Gastrocnemius medialis (tissue), 4 donors: ENCODE measurements at regions of chr19 and their contacts with region 1.

Region 1: DNA sequence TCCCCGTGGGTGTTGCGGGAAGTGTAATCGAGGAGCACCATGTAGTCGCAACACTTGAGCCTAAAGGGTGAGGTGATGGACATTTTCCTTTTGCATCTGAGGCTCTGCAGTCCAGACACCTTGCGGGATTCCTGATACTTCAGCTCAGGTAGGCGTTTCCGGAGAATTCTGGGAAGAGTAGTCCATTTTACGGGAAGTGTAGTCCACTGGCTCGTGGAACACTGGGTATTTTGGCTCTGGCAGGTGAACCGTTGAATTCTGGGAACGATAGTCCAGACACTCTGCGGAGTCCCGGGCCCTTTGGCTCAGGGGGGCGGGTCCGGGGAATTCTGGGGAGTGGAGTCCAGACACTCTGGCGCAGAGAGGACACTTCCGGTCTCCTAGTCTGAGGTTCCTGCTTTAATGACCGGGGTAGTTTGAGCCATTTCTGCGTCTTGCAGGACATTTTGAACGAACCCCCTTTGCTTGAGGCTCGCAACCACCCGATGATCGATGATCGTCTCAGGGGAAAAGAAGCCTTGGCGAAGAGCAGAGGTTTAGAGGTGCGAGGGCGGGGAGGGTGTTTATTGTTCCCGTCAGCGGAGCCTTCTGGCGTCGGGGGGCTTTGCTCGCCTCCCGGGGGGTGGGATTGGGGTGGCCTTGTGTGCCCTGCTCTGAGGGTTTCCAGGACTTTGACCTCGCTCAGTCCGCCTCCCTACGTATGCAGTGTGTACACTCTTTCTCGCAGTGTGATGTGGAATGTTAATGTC is at the start of gene ZNF223:
- DNase-seq: peak; percentile 94
- ATAC-seq: peak; percentile 100
- H3K4me3 ChIP-seq: peak within 1 kb of the TSS; percentile 72 to 84 (median 81)
- H3K27ac ChIP-seq: peak within 1 kb of the TSS; percentile 73 to 81 (median 78)
- H3K4me1 ChIP-seq: peaks cover 12 to 18% of the 10 kb centered on the region in 2 donors
- H3K27me3 ChIP-seq: peaks cover 0 to 25% (median 5%) of the 10 kb centered on the region in 3 donors
- CTCF ChIP-seq: no peak
- POLR2A ChIP-seq: no peak
- total RNA-seq, gene ZNF223: 0.56 to 3.0 (median 0.91) TPM in 3 of 4 donors, not detected in the other

Region 2: DNA sequence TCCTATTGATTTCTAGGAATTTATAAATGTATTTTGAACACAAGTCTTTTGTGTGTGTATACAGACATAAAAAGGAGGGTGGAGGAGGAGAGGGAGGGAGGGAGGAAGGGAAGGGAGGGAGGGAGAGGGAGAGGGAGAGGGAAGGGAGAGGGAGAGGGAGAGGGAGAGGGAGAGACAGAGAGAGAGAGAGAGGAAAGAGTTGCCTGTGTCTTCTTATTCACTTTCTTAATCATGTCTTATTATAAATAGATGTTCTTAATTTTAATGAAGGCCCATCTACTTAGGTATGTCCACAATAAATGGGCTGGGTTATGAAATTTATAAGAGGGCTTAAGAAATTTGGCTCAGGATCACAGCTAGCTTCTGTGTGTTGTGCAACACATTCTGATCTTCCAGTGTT is 156.1 kb before region 1 on chr19:
- in situ Hi-C with region 1: no loop called
- intact Hi-C with region 1: no loop called
- DNase-seq: no peak
- ATAC-seq: no peak
- H3K4me3 ChIP-seq: no peak overlapping the region
- H3K27ac ChIP-seq: no peak overlapping the region
- H3K4me1 ChIP-seq: peaks cover 0 to under 1% of the 10 kb centered on the region in 2 donors
- H3K27me3 ChIP-seq: no peaks in the 10 kb centered on the region
- CTCF ChIP-seq: no peak
- POLR2A ChIP-seq: no peak

Region 3: DNA sequence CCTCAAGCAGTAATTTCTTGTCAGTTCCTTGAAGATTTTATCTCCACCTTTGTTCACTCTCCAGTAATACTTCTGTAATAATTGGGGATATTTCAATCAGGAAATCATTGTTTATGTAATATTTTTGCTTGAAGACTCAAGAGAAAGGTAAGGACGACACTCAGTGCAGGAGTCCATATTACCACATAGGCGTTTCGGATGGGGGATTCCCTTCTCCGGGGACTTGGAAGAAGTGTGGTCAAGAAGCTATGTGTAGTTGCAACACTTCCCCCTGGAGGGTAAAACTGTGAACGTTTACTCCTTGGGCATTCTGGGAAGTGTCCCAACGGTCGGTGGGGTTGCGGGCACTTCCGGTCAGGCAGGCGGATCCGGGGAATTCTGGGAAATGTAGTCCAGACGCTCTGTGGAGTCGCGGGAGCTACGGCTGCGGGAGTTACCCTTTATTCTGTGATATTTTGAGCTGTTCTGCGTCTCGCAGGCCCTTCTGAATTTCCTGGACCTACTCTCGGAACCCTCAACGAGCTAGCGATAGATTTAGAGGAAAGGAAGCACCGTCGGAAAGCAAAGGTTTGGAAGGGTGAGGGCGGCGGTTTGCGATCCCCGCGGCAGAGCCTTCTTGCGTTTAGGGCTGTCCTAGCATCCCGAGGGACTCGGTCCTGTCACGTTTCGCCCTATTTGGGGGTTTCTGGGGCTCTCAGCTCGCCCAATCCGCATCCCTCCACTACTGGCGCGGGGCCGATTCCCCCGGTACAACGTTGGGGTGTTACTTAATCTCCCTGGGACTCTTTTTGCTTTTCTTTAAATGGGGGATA is 100.8 kb before region 1 on chr19 and contains the start of gene ZNF221:
- in situ Hi-C with region 1: no loop called
- intact Hi-C with region 1: loop called (anchors 10 kb)
- DNase-seq: peak; percentile 87 to 90
- ATAC-seq: peak; percentile 100
- H3K4me3 ChIP-seq: peak within 1 kb of the TSS; percentile 70 to 97 (median 84)
- H3K27ac ChIP-seq: peak within 1 kb of the TSS; percentile 66 to 80 (median 74)
- H3K4me1 ChIP-seq: peaks cover 0 to 3% of the 10 kb centered on the region in 2 donors
- H3K27me3 ChIP-seq: no peaks in the 10 kb centered on the region
- CTCF ChIP-seq: peak in 4 of 5 experiments; percentile 19 to 48 (median 38)
- POLR2A ChIP-seq: no peak
- total RNA-seq, gene ZNF221: 0.76 to 15.3 (median 0.96) TPM

Region 4: GRCh38 chr19:44025217-44025936 is 26.5 kb before region 1 on chr19 and contains the start of gene ZNF222:
- in situ Hi-C with region 1: no loop called
- intact Hi-C with region 1: loop called (anchors 1 kb)
- DNase-seq: peak; percentile 63 to 67
- ATAC-seq: peak; percentile 91 to 96
- H3K4me3 ChIP-seq: peak within 1 kb of the TSS; percentile 62 to 86 (median 78)
- H3K27ac ChIP-seq: peak within 1 kb of the TSS; percentile 58 to 71 (median 63)
- H3K4me1 ChIP-seq: no peaks in the 10 kb centered on the region
- H3K27me3 ChIP-seq: no peaks in the 10 kb centered on the region
- CTCF ChIP-seq: no peak
- POLR2A ChIP-seq: no peak
- total RNA-seq, gene ZNF222: 0.56 to 1.6 (median 1.1) TPM

Region 5: GRCh38 chr19:44093931-44094765 is 42.3 kb after region 1 on chr19 and contains the start of gene ZNF224:
- in situ Hi-C with region 1: no loop called
- intact Hi-C with region 1: loop called (anchors 1 kb)
- DNase-seq: peak; percentile 85 to 87
- ATAC-seq: peak; percentile 100
- H3K4me3 ChIP-seq: peak within 1 kb of the TSS; percentile 76 to 91 (median 80)
- H3K27ac ChIP-seq: peak within 1 kb of the TSS; percentile 70 to 82 (median 73)
- H3K4me1 ChIP-seq: peaks cover 7 to 10% of the 10 kb centered on the region in 2 donors
- H3K27me3 ChIP-seq: no peaks in the 10 kb centered on the region
- CTCF ChIP-seq: no peak
- POLR2A ChIP-seq: peak in 1 of 2 donors; percentile 41
- total RNA-seq, gene ZNF224: 4.9 to 14.1 (median 6.9) TPM

Region 6: GRCh38 chr19:44141191-44142058 is 89.6 kb after region 1 on chr19 and contains the start of gene ZNF234:
- in situ Hi-C with region 1: loop called in 1 of 4 experiments (anchors 10 kb)
- intact Hi-C with region 1: no loop called
- DNase-seq: peak; percentile 78
- ATAC-seq: peak; percentile 98 to 99
- H3K4me3 ChIP-seq: peak within 1 kb of the TSS; percentile 85 to 98 (median 88)
- H3K27ac ChIP-seq: peak within 1 kb of the TSS; percentile 78 to 87 (median 82)
- H3K4me1 ChIP-seq: peaks cover 14 to 18% of the 10 kb centered on the region in 2 donors
- H3K27me3 ChIP-seq: no peaks in the 10 kb centered on the region
- CTCF ChIP-seq: no peak
- POLR2A ChIP-seq: peak in 1 of 2 donors; percentile 42
- total RNA-seq, gene ZNF234: 2.2 to 3.5 (median 2.9) TPM

Region 7: GRCh38 chr19:44190020-44190419 is 138.2 kb after region 1 on chr19:
- in situ Hi-C with region 1: no loop called
- intact Hi-C with region 1: no loop called
- DNase-seq: no peak
- ATAC-seq: no peak
- H3K4me3 ChIP-seq: no peak overlapping the region
- H3K27ac ChIP-seq: no peak overlapping the region
- H3K4me1 ChIP-seq: no peaks in the 10 kb centered on the region
- H3K27me3 ChIP-seq: no peaks in the 10 kb centered on the region
- CTCF ChIP-seq: no peak
- POLR2A ChIP-seq: no peak

Region 8: DNA sequence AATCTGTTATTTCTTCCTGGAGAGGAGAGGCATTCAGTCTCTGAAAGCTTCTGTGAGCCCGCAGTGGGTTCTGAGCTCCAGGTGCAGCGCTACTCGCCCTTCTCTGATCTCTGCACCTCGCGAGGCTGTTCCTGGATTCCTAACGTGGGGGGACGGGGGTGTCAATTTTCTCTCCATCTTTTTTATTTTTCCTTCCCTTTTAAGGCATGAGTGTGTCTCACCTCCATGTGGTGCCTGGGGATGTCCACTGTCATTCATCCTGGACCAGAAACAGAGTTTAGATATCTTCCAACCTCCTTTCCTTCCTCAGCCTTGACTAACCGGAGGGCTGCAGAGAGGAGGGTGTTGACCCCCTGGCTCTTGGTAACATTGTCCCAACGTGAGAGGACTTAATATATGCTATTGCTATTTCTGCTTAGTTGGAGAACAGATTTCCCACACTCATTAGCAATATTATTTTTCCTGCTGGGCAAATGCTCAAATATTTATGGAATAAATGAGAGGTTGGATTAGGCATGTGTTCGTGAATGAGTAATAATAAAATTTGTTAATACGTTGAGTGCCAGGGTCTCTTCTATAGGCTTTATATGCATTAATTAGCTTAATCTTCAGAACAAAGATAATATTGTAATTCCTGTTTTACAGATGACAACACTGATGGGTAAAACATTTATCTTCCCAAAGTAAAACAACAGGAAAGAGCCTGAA is 208.7 kb after region 1 on chr19:
- in situ Hi-C with region 1: no loop called
- intact Hi-C with region 1: no loop called
- DNase-seq: no peak
- ATAC-seq: no peak
- H3K4me3 ChIP-seq: peak overlapping the region; percentile 34 to 48 (median 46)
- H3K27ac ChIP-seq: peak overlapping the region; percentile 18 to 73 (median 50)
- H3K4me1 ChIP-seq: no peaks in the 10 kb centered on the region
- H3K27me3 ChIP-seq: no peaks in the 10 kb centered on the region
- CTCF ChIP-seq: no peak
- POLR2A ChIP-seq: no peak

Region 9: DNA sequence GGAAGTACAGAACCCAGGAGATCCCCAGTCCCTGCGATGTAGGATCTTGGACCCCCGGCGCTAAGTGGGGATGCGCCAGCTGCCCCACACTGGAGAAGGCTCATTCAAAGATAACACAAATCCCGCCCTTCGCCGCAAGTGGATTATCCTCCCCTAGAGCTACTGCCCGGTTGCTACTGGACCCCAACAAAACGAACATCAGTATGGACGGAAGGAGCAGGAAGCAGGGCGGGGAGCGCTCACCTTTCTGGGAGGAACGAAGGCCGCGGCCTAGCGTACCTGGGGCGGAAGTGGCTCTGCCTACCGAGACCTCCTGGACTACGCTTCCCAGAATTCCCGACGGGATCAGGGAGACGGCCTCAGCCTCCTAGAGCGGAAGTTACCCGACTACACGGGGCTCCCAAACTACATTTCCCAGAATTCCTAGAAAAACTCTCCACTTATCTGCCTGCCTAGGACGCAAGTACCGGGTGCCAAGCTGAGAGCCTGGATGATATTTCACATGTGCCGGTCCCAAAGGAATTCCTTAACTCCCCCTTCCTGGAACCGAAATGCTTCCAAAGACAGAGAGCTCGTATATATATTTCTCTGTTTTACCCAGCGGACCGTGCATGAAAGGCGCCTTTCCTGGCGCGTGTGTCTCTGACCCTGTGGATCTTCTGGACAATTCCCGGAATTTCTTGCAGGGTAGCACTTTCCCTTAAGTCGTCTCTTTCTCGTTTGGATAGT is 304.7 kb after region 1 on chr19 and contains the start of gene ZNF112:
- in situ Hi-C with region 1: no loop called
- intact Hi-C with region 1: loop called (anchors 5 kb)
- DNase-seq: peak; percentile 85 to 88
- ATAC-seq: peak; percentile 100
- H3K4me3 ChIP-seq: peak within 1 kb of the TSS; percentile 51 to 74 (median 65)
- H3K27ac ChIP-seq: peak within 1 kb of the TSS; percentile 46 to 68 (median 58)
- H3K4me1 ChIP-seq: peaks cover 8 to 9% of the 10 kb centered on the region in 2 donors
- H3K27me3 ChIP-seq: no peaks in the 10 kb centered on the region
- CTCF ChIP-seq: no peak
- POLR2A ChIP-seq: no peak
- total RNA-seq, gene ZNF112: 0.78 to 4.0 (median 1.6) TPM